ENCODE measurements at regions of chr2 and their contacts with region 1.

Region 1: GRCh38 chr2:138787053-138787666 is 7.0 kb upstream of the NXPH2 start:
- DNase-seq: no peak
- H3K4me3 ChIP-seq: no peak overlapping the region
- H3K27ac ChIP-seq: no peak overlapping the region
- H3K4me1 ChIP-seq: no peaks in the 10 kb centered on the region
- H3K27me3 ChIP-seq: peaks cover 11% of the 10 kb centered on the region
- CTCF ChIP-seq: peak; percentile 56 to 67 (median 62)
- EP300 ChIP-seq: no peak
- POLR2A ChIP-seq: no peak

Region 2: DNA sequence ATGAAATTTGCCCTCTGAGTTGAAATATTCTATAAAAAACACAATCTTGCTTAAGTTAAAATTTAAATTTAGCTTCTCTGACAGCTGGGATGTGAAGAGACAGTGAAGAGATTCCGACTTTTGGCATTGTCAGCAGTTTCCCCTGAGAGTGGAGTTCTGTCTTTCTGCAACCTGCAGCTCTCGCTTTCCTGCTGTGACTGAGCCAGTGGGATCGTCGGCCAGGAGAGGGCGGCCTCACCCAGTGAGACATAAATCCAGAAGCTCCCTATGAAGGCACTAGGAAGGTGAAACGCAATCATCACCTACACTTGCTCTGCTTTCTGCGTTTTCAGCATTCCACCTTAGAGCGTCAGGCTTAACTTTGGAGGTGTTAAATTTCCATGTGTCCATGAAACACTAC is 898.3 kb before region 1 on chr2:
- in situ Hi-C with region 1: loop called in 1 of 4 experiments (anchors 25 kb)
- intact Hi-C with region 1: no loop called
- DNase-seq: peak; percentile 29
- H3K4me3 ChIP-seq: no peak overlapping the region
- H3K27ac ChIP-seq: no peak overlapping the region
- H3K4me1 ChIP-seq: no peaks in the 10 kb centered on the region
- H3K27me3 ChIP-seq: no peaks in the 10 kb centered on the region
- CTCF ChIP-seq: peak in 2 of 5 experiments; percentile 36 to 45
- EP300 ChIP-seq: no peak
- POLR2A ChIP-seq: no peak

Region 3: DNA sequence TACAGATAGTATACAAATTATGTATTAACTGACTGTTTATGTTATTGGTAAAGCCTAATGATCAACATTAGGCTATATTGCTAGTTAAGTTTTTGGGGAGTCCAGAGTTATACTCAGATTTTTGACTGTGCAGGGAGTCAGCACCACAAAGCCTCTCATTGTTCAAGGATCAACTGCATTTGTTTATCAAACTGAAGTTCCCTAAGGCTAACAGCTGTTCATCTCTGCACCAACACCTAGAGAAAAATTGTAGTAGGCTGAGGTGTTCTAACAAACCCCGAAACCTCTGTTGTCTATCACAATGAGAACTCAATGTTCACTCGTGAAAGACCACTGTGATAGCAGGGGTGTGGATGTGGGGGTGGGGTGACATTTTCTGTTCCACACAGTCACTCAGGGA is 725.2 kb before region 1 on chr2:
- in situ Hi-C with region 1: no loop called
- intact Hi-C with region 1: no loop called
- DNase-seq: no peak
- H3K4me3 ChIP-seq: no peak overlapping the region
- H3K27ac ChIP-seq: no peak overlapping the region
- H3K4me1 ChIP-seq: no peaks in the 10 kb centered on the region
- H3K27me3 ChIP-seq: no peaks in the 10 kb centered on the region
- CTCF ChIP-seq: no peak
- EP300 ChIP-seq: no peak
- POLR2A ChIP-seq: no peak

Measured in transverse colon (tissue), 4 donors.